A673 (cell line): ENCODE measurements at regions of chr11 and their contacts with region 1.

Region 1: DNA sequence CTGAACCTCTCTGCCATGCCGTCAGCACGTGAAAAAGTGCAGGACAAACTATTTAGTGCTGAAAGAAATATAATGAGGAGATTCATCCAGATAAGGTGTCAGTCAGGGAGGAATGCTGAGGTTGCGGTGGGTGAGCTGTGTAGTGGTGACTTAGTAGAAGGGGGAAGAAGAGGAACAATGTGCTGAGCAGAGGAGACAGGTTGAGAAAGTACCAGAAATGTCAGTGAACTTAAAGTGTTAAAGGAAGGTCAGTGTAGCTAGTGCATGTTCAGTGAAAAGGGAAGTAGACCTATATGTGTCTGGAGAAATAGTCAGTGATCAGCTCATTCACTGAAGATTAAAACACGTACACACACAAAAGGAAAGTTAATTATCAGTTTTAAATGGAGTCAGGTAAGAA is 237.6 kb upstream of the CCDC179 start:
- DNase-seq: no peak
- H3K4me3 ChIP-seq: no peak overlapping the region
- H3K27ac ChIP-seq: no peak overlapping the region
- H3K4me1 ChIP-seq: no peaks in the 10 kb centered on the region
- H3K27me3 ChIP-seq: no peaks in the 10 kb centered on the region
- CTCF ChIP-seq: no peak

Region 2: GRCh38 chr11:23021287-23021863 is 76.5 kb before region 1 on chr11:
- CTCF ChIA-PET with region 1: interaction called, 10 read pairs
- POLR2A ChIA-PET with region 1: no interaction called
- intact Hi-C with region 1: no loop called
- DNase-seq: peak; percentile 16
- H3K4me3 ChIP-seq: no peak overlapping the region
- H3K27ac ChIP-seq: no peak overlapping the region
- H3K4me1 ChIP-seq: no peaks in the 10 kb centered on the region
- H3K27me3 ChIP-seq: no peaks in the 10 kb centered on the region
- CTCF ChIP-seq: peak; percentile 62